ENCODE measurements at regions of chr2 and their contacts with region 1.

Region 1: GRCh38 chr2:5691975-5692529 is at the start of gene SOX11:
- ATAC-seq: peak in 7 of 8 experiments; percentile 26 to 70 (median 63)
- H3K4me3 ChIP-seq: peak within 1 kb of the TSS; percentile 42 to 77 (median 69)
- H3K27ac ChIP-seq: peak within 1 kb of the TSS; percentile 96 to 97
- H3K4me1 ChIP-seq: peaks cover 5 to 20% of the 10 kb centered on the region in 2 donors
- total RNA-seq, gene SOX11: 0.10 to 221 (median 81.3) TPM

Region 2: DNA sequence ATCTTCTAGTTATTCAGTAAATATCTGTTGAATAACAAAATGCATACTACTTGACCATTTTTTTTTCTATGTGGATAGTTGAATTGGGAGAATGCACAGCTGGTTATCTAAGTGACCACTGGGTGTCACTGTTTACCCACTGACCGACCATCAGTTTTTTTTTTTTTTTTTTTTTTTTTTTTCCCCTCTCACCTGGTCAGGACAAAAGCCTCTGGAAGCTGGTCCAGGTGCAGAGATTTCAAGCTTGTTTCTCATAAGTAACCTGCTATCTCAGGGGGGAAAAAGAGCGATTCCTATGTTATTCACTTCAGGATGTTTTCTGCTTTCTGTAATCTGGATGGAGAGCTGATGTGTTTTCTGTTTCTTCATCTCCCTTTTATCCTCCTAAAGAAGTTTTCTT is 1732.7 kb before region 1 on chr2:
- in situ Hi-C with region 1: loop called in 1 of 9 experiments (anchors 25 kb)
- ATAC-seq: peak in 7 of 8 experiments; percentile 19 to 55 (median 42)
- H3K4me3 ChIP-seq: no peak overlapping the region
- H3K27ac ChIP-seq: no peak overlapping the region
- H3K4me1 ChIP-seq: peaks cover 6 to 24% of the 10 kb centered on the region in 2 donors

Region 3: DNA sequence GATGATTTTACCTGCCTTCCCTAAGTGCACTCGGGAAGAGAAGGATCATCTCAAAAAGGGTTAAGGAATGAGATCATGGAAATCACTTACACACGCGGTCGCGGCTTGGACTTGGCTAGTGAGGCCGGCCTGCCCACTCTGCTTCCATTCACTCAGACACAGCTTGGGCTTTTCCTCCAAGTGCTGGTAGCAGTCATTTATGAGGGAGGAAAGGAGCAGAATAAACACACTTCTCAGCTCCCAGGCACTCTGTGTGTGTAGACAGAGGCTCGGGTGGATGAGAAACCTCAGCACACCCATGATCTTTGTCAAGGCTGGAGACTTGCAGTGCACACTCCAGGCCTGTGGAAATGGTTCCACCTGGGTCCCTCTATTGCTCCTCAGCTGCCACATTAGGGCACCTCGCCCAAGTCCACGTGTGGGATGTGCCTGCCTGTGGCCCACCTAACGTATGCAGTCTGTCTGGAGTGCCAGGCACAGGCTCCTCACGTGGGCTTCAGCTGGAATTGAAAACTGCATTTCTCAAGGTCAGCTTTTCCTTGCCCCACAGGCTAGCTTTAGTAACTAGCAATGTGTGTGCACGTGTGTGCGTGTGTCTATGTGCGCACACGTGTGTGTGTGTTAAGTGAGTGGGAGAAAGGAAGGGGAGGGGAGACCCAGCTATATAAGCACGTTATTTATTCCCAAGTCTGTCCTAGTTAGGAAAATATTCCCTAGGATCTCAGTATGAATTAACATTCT is 288.6 kb after region 1 on chr2:
- in situ Hi-C with region 1: loop called in 1 of 9 experiments (anchors 10 kb)
- ATAC-seq: peak in 5 of 8 experiments; percentile 0 to 13 (median 5)
- H3K4me3 ChIP-seq: peak overlapping the region; percentile 26 to 49 (median 40)
- H3K27ac ChIP-seq: peak overlapping the region; percentile 94 to 99
- H3K4me1 ChIP-seq: peaks cover 55 to 71% of the 10 kb centered on the region in 2 donors

Measured in motor neuron (in vitro differentiated cells).